Naive thymus-derived CD4-positive, alpha-beta T cell (primary cell): ENCODE measurements at regions of chr12 and their contacts with region 1.

Region 1: DNA sequence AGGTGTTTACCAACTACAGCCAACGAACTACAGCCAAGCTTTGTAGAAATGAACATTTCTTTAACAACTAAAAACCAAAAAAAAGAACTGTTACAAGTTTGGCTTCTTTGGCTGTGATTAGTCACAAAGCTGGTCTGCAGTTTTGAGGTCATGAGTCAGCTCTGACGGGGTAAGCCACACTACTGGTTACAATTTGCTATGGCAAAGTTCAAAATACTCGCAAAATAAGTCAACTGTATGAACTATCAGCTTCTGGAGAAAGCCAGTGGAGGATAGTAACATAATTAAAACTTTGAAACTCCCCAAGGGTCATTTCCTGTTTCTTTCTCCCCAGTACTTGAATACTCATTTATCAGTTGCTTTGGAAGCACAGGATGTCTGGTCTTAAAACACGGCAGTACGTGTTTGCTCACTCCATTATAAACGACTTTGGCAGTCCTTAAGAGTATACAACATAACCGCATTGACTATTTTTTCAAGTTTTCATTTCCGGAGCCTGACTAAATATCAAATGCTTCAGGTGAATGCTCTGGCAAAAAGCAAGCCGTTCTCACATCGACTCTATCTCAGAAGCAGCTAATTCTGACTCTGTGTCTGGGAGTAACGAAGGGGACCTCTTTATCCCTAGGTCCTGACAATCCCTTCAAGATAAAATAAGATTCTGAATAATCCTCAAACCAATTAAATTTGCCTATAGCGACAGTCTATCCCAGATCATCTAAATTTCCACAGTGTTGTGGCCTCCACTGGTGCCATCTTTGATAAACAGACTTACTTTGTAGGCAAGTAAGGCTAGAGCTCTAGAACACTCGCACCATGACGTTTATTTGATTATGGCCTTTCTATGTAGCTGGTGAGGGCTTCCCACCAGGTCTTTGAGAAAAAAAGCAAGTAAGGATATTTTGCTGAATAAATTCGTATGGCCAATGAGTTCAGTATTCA is 10.6 kb downstream of the PHLDA1 start:
- DNase-seq: peak in 8 of 9 donors; percentile 32 to 65 (median 54)
- ATAC-seq: peak; percentile 87
- H3K4me3 ChIP-seq: peak overlapping the region; percentile 21
- H3K4me3 Mint-ChIP-seq: peak overlapping the region in 9 of 10 donors; percentile 33 to 74 (median 67)
- H3K27ac ChIP-seq: peak overlapping the region; percentile 43
- H3K27ac Mint-ChIP-seq: peak overlapping the region; percentile 84 to 98 (median 90)
- H3K4me1 ChIP-seq: peaks cover 15 to 17% of the 10 kb centered on the region in 2 donors
- H3K4me1 Mint-ChIP-seq: peaks cover 6 to 56% (median 21%) of the 10 kb centered on the region in 7 donors
- H3K27me3 ChIP-seq: no peaks in the 10 kb centered on the region
- H3K27me3 Mint-ChIP-seq: no peaks in the 10 kb centered on the region

Region 2: GRCh38 chr12:74537707-74538385 is 1483.2 kb before region 1 on chr12 and contains the start of gene ATXN7L3B:
- CTCF ChIA-PET with region 1: no interaction called
- POLR2A ChIA-PET with region 1: no interaction called
- intact Hi-C with region 1: loop called in 1 of 2 experiments (anchors 5 kb)
- DNase-seq: peak; percentile 94 to 98 (median 97)
- ATAC-seq: peak; percentile 97
- H3K4me3 ChIP-seq: peak within 1 kb of the TSS; percentile 85
- H3K4me3 Mint-ChIP-seq: peak within 1 kb of the TSS; percentile 87 to 99 (median 97)
- H3K27ac ChIP-seq: peak within 1 kb of the TSS; percentile 94
- H3K27ac Mint-ChIP-seq: peak within 1 kb of the TSS; percentile 96 to 100 (median 99)
- H3K4me1 ChIP-seq: peaks cover 27 to 32% of the 10 kb centered on the region in 2 donors
- H3K4me1 Mint-ChIP-seq: peaks cover 39 to 60% (median 54%) of the 10 kb centered on the region in 7 donors
- H3K27me3 ChIP-seq: no peaks in the 10 kb centered on the region
- H3K27me3 Mint-ChIP-seq: no peaks in the 10 kb centered on the region
- total RNA-seq, gene ATXN7L3B: 25.6 to 51.6 (median 46.9) TPM

Region 3: GRCh38 chr12:75933101-75933500 is 87.9 kb before region 1 on chr12:
- CTCF ChIA-PET with region 1: no interaction called
- POLR2A ChIA-PET with region 1: no interaction called
- intact Hi-C with region 1: loop called in 1 of 2 experiments (anchors 1 kb)
- DNase-seq: no peak
- ATAC-seq: no peak
- H3K4me3 ChIP-seq: no peak overlapping the region
- H3K4me3 Mint-ChIP-seq: no peak overlapping the region
- H3K27ac ChIP-seq: no peak overlapping the region
- H3K27ac Mint-ChIP-seq: no peak overlapping the region
- H3K4me1 ChIP-seq: peaks cover 0 to 14% of the 10 kb centered on the region in 2 donors
- H3K4me1 Mint-ChIP-seq: peaks cover 0 to 26% (median 9%) of the 10 kb centered on the region in 7 donors
- H3K27me3 ChIP-seq: no peaks in the 10 kb centered on the region
- H3K27me3 Mint-ChIP-seq: peaks cover 0 to 16% (median 2%) of the 10 kb centered on the region in 5 donors

Region 4: DNA sequence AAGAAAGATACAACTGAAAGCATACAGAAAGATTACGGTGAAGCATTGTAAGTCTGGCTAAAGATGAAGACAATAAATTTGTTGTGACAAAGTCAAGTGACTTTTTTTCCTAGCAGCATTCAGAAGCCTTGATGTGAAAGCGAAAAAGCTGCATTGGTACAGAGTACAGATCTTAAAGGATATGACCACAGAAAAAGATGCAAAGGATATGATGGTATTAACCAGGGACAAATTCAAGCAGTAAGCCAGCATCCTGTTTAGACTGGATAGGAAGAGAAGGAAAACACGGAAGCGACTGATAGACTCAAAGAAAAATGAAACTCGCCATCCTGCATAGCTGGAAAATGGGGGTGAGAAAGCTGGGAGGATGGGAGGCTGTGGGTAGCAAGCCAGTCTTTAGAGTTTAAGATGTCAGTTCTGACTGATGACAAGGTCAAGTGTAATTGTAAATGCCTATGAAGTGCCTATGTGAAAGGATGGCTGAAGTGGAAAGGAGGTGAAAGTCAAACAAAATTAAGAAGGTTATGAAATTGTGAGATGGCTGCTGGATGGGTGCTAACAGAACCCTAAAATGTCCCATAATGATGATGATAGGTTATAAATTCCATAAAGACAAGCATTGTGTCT is 81.9 kb before region 1 on chr12:
- CTCF ChIA-PET with region 1: no interaction called
- POLR2A ChIA-PET with region 1: no interaction called
- intact Hi-C with region 1: loop called (anchors 1 kb)
- DNase-seq: no peak
- ATAC-seq: no peak
- H3K4me3 ChIP-seq: no peak overlapping the region
- H3K4me3 Mint-ChIP-seq: no peak overlapping the region
- H3K27ac ChIP-seq: no peak overlapping the region
- H3K27ac Mint-ChIP-seq: no peak overlapping the region
- H3K4me1 ChIP-seq: peaks cover 0 to 15% of the 10 kb centered on the region in 2 donors
- H3K4me1 Mint-ChIP-seq: peaks cover 0 to 15% (median 12%) of the 10 kb centered on the region in 7 donors
- H3K27me3 ChIP-seq: no peaks in the 10 kb centered on the region
- H3K27me3 Mint-ChIP-seq: no peaks in the 10 kb centered on the region

Region 5: DNA sequence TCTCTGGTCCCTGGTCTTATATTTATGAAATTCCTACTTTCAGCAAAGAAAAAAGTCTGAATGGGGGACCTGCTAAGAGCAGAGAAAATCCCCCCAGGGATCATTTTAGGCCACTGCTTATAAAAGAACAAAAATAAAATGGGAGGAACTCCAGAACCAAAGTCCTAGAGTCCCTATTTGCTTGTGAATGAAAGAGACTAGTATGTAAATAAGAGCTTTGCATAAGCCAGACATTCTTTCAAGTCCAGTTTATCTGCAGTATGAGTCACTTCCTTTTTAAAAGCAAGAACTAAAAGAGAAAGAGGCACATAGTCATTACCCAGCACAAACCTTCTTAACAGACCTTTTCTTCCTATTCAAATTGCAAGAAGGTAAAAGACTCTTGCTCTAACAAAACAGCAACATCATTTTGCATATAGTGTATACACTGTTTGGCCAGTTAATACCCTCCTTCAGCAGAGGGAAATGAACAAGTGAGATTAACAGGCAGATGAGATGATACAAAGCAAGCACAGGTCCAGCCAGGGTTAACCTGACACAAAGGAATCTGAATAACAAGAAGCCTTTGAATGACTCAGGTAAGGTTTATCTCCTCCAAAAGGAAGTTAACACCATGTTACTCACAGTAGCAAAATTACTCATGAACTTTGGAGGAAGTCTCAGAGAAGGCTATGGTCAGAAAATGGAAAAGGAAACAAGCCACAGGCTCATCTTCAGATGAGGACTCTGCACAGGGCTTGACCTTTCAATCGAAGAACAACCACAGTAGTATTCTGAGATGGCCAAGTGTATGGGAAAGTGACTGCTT is 76.7 kb before region 1 on chr12:
- CTCF ChIA-PET with region 1: no interaction called
- POLR2A ChIA-PET with region 1: no interaction called
- intact Hi-C with region 1: loop called (anchors 1 kb)
- DNase-seq: peak in 1 of 9 donors; percentile 35
- ATAC-seq: peak; percentile 87
- H3K4me3 ChIP-seq: no peak overlapping the region
- H3K4me3 Mint-ChIP-seq: peak overlapping the region in 2 of 10 donors; percentile 61 to 83
- H3K27ac ChIP-seq: no peak overlapping the region
- H3K27ac Mint-ChIP-seq: peak overlapping the region in 5 of 9 donors; percentile 40 to 97 (median 74)
- H3K4me1 ChIP-seq: peaks cover 0 to 16% of the 10 kb centered on the region in 2 donors
- H3K4me1 Mint-ChIP-seq: peaks cover 7 to 28% (median 11%) of the 10 kb centered on the region in 7 donors
- H3K27me3 ChIP-seq: no peaks in the 10 kb centered on the region
- H3K27me3 Mint-ChIP-seq: no peaks in the 10 kb centered on the region

Region 6: DNA sequence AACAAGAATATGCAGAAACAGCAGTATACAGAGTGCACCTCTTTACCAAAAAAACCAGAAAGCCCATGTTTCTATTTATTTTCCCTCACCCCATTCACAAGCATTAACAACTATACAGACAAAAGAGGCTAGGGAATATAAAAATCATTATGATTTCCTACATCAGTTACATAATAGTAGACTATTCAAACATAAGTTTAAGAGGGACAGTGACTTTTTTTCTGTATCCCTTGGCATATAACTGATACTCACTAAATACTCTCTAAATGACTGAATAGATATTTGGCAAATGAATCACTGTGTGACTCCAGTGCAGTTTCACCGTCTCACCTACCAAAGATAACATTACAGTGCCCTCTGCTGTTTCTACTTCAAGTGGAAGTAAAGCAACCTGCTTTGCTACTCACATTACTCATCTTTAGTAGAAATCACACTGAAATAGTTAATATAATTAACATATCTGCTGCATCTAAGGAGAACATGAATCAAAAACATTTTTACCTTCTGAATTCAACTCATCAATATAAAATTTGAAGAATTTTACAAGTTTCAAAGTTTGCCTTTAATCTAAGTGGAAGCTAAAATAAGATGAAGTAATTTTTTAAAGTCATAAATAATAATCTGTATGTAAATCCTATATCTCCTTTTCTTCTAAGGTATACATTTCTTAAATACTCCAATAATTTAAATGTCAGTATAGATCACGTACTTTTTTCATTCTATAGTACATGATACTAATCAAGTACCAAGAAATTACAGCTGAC is 434.8 kb after region 1 on chr12:
- CTCF ChIA-PET with region 1: no interaction called
- POLR2A ChIA-PET with region 1: no interaction called
- intact Hi-C with region 1: no loop called
- DNase-seq: peak in 6 of 9 donors; percentile 15 to 49 (median 38)
- ATAC-seq: peak; percentile 78
- H3K4me3 ChIP-seq: no peak overlapping the region
- H3K4me3 Mint-ChIP-seq: peak overlapping the region in 1 of 10 donors; percentile 38
- H3K27ac ChIP-seq: no peak overlapping the region
- H3K27ac Mint-ChIP-seq: peak overlapping the region in 3 of 9 donors; percentile 36 to 65 (median 46)
- H3K4me1 ChIP-seq: peaks cover 14 to 16% of the 10 kb centered on the region in 2 donors
- H3K4me1 Mint-ChIP-seq: peaks cover 10 to 58% (median 37%) of the 10 kb centered on the region in 7 donors
- H3K27me3 ChIP-seq: no peaks in the 10 kb centered on the region
- H3K27me3 Mint-ChIP-seq: no peaks in the 10 kb centered on the region